Activated CD4-positive, alpha-beta T cell treated with anti-CD3 and anti-CD28 coated beads for 36 hours (primary cell): ENCODE measurements at regions of chr15 and their contacts with region 1.

Region 1: GRCh38 chr15:20386198-20386597 is 155.4 kb downstream of the GOLGA6L6 start:
- DNase-seq: no peak
- ATAC-seq: no peak
- H3K4me3 Mint-ChIP-seq: no peak overlapping the region
- H3K27ac Mint-ChIP-seq: no peak overlapping the region
- H3K4me1 Mint-ChIP-seq: no peaks in the 10 kb centered on the region
- H3K27me3 Mint-ChIP-seq: no peaks in the 10 kb centered on the region

Region 2: GRCh38 chr15:20310603-20311002 is 75.6 kb before region 1 on chr15:
- CTCF ChIA-PET with region 1: no interaction called
- POLR2A ChIA-PET with region 1: no interaction called
- intact Hi-C with region 1: loop called in 1 of 2 experiments (anchors 5 kb)
- DNase-seq: no peak
- ATAC-seq: no peak
- H3K4me3 Mint-ChIP-seq: no peak overlapping the region
- H3K27ac Mint-ChIP-seq: no peak overlapping the region
- H3K4me1 Mint-ChIP-seq: no peaks in the 10 kb centered on the region
- H3K27me3 Mint-ChIP-seq: no peaks in the 10 kb centered on the region

Region 3: GRCh38 chr15:20344601-20345400 is 41.4 kb before region 1 on chr15:
- CTCF ChIA-PET with region 1: interaction called, 3 read pairs
- POLR2A ChIA-PET with region 1: no interaction called
- intact Hi-C with region 1: loop called in 1 of 2 experiments (anchors 5 kb)
- DNase-seq: peak; percentile 13
- ATAC-seq: no peak
- H3K4me3 Mint-ChIP-seq: no peak overlapping the region
- H3K27ac Mint-ChIP-seq: no peak overlapping the region
- H3K4me1 Mint-ChIP-seq: no peaks in the 10 kb centered on the region
- H3K27me3 Mint-ChIP-seq: no peaks in the 10 kb centered on the region

Region 4: GRCh38 chr15:22262613-22263020 is 1876.4 kb after region 1 on chr15:
- CTCF ChIA-PET with region 1: no interaction called
- POLR2A ChIA-PET with region 1: no interaction called
- intact Hi-C with region 1: loop called in 1 of 2 experiments (anchors 5 kb)
- DNase-seq: peak; percentile 67
- ATAC-seq: no peak
- H3K4me3 Mint-ChIP-seq: no peak overlapping the region
- H3K27ac Mint-ChIP-seq: no peak overlapping the region
- H3K4me1 Mint-ChIP-seq: peaks cover 23% of the 10 kb centered on the region
- H3K27me3 Mint-ChIP-seq: peaks cover 5% of the 10 kb centered on the region